ENCODE measurements at regions of chr15 and their contacts with region 1.

Region 1: DNA sequence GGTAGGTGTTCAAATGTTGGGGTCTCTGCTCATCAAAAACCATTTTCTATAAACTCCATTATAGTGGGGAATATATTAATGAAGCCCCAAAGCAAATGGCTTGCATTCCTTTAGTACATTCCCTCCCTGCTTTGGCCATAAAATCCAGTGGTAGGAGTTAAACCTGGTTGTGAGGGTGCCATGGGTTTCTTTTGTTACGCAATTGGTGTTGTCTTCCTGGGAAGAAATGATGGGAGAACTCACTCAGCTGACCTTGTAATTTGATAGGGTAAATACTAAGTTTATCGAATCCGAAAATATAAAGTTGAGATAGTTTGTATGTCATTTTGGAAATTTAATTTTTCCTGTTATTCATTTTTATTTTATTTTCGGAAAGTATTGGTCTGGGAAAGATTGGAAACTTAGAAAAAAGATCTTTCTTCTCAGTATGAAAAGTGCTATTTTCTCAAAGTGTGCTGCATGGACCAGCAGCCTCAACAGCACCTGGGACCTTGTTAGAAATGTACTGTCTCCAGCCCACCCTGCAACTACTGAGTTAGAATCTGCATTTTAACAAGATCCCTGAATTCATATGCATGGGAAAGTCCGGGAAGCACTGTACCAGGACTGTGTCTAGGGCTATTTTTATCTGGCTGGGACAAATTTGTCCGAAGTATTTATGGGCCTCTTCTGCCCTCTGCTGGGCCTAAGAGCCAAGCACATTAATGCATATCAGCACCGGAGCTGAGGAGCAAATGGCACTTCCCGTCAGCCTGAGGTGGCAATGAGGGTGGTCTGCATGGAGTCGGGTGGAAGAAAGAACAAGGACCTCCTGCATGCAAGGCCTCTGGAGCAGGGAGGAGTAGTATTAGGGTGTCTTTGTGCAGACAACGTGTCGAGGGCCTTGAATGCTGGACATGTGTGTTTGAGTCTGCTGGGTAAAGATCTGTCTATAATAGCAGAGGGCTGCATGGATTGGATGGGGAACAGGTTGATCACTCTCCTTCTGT is 54.7 kb downstream of the FAM81A start:
- DNase-seq: peak; percentile 71
- H3K4me3 ChIP-seq: no peak overlapping the region
- H3K27ac ChIP-seq: no peak overlapping the region
- H3K4me1 ChIP-seq: no peaks in the 10 kb centered on the region
- H3K27me3 ChIP-seq: no peaks in the 10 kb centered on the region
- CTCF ChIP-seq: peak; percentile 82

Region 2: DNA sequence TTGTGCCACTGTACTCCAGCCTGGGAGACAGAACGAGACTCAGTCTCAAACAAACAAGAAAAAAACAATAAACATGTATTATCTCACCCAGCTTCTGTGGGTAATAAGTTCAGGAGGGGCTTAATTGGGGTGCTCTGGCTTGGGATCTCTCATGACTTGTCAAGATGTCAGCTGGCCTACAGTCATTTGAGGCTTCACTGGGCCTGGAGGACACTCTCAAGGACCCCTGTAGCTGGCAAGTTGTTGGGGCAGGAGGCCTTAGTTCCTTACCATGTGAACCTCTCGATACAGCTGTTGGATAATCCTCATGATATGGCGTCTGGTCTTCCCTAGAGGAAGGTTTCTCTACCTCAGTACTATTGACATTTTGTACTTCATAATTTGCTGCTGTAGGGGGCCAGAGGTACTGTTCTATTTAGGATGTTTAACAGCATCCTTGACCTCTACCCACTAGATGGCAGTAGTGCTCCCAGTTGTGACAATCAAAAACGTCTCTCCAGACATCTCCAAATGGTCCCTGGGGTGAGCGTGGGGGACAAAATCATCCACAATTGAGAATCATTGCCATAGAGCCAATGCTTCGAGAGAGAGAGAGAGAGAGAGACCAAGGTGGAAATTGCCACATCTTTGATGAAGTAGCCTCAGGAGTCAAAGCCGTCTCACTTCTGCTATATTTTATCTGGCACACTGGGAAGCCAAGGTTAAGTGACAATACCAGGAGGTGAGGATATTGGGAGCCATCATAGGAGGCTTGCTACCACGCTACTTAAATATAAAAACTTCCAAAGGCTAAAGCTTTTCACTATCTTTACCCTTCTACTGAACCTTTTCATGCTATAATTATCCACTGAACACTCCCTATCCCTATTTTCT is 535.3 kb before region 1 on chr15:
- CTCF ChIA-PET with region 1: interaction called, 3 read pairs
- POLR2A ChIA-PET with region 1: no interaction called
- intact Hi-C with region 1: loop called (anchors 10 kb)
- DNase-seq: peak; percentile 90
- H3K4me3 ChIP-seq: no peak overlapping the region
- H3K27ac ChIP-seq: no peak overlapping the region
- H3K4me1 ChIP-seq: no peaks in the 10 kb centered on the region
- H3K27me3 ChIP-seq: no peaks in the 10 kb centered on the region
- CTCF ChIP-seq: peak; percentile 80

Region 3: DNA sequence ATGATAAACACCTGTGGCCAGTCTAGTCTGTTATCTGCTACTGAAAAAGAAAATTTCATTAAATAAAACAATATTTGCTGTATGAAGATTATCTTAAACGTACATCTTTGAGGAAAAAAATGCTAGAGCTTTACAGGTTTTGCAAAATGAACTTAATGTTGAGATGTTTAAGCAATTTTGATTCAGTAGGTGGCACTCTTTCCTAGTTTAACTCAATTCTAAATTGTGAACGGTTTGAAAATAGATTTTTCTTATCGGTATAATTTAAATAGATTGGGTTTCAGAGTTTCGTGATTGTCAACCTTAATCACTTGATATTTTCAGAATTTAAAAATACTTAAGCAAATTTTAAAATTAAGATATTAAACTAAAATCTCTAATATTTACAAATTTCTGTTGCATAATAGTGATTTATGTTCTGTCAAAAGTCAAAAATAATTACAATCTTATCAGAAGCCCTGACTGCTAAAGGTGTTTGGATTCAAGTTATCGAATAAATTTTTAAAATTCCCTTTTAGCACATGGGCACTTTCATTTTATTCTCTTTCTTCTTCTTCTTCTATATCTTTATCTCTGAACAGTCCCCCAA is 512.2 kb before region 1 on chr15:
- CTCF ChIA-PET with region 1: interaction called, 3 read pairs
- POLR2A ChIA-PET with region 1: no interaction called
- intact Hi-C with region 1: loop called (anchors 2 kb)
- DNase-seq: peak; percentile 60
- H3K4me3 ChIP-seq: no peak overlapping the region
- H3K27ac ChIP-seq: no peak overlapping the region
- H3K4me1 ChIP-seq: no peaks in the 10 kb centered on the region
- H3K27me3 ChIP-seq: no peaks in the 10 kb centered on the region
- CTCF ChIP-seq: peak; percentile 62

Region 4: GRCh38 chr15:59160880-59161593 is 331.6 kb before region 1 on chr15:
- CTCF ChIA-PET with region 1: no interaction called
- POLR2A ChIA-PET with region 1: no interaction called
- intact Hi-C with region 1: loop called (anchors 2 kb)
- DNase-seq: peak; percentile 24
- H3K4me3 ChIP-seq: no peak overlapping the region
- H3K27ac ChIP-seq: no peak overlapping the region
- H3K4me1 ChIP-seq: no peaks in the 10 kb centered on the region
- H3K27me3 ChIP-seq: no peaks in the 10 kb centered on the region
- CTCF ChIP-seq: peak; percentile 51

Region 5: GRCh38 chr15:59247364-59247763 is 245.3 kb before region 1 on chr15:
- CTCF ChIA-PET with region 1: interaction called, 5 read pairs
- POLR2A ChIA-PET with region 1: no interaction called
- intact Hi-C with region 1: loop called (anchors 2 kb)
- DNase-seq: peak; percentile 72
- H3K4me3 ChIP-seq: no peak overlapping the region
- H3K27ac ChIP-seq: no peak overlapping the region
- H3K4me1 ChIP-seq: no peaks in the 10 kb centered on the region
- H3K27me3 ChIP-seq: no peaks in the 10 kb centered on the region
- CTCF ChIP-seq: peak; percentile 71